CD8-positive, alpha-beta T cell (primary cell): ENCODE measurements at regions of chr4 and their contacts with region 1.

Region 1: DNA sequence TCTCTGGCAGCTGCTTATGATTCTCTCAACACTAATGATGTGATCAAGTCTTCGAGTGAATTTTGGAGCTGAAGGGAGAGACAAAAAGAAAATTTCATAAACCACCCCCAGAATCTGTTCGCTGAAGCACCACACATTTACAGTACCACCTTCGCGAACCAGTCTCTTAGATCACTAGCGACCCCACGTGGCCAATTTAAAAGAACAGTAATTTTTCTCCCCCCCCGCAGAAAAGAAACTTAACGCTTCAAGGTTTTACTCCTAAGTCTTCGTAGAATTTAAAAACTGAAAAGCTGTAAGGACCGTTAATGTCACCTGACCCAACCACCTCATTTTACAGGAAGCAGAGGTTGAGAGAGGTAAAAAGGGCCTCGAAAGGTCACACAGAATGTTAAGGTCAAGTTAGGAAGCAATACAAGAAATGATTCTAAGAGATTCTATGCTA is 187.5 kb downstream of the QDPR start:
- DNase-seq: peak in 8 of 9 experiments; percentile 30 to 66 (median 55)
- ATAC-seq: peak; percentile 66
- H3K4me3 ChIP-seq: no peak overlapping the region
- H3K4me3 Mint-ChIP-seq: peak overlapping the region; percentile 56
- H3K27ac ChIP-seq: no peak overlapping the region
- H3K27ac Mint-ChIP-seq: no peak overlapping the region
- H3K4me1 ChIP-seq: peaks cover 4% of the 10 kb centered on the region
- H3K4me1 Mint-ChIP-seq: peaks cover 11% of the 10 kb centered on the region
- H3K27me3 ChIP-seq: no peaks in the 10 kb centered on the region
- H3K27me3 Mint-ChIP-seq: no peaks in the 10 kb centered on the region
- CTCF ChIP-seq: peak; percentile 61

Region 2: DNA sequence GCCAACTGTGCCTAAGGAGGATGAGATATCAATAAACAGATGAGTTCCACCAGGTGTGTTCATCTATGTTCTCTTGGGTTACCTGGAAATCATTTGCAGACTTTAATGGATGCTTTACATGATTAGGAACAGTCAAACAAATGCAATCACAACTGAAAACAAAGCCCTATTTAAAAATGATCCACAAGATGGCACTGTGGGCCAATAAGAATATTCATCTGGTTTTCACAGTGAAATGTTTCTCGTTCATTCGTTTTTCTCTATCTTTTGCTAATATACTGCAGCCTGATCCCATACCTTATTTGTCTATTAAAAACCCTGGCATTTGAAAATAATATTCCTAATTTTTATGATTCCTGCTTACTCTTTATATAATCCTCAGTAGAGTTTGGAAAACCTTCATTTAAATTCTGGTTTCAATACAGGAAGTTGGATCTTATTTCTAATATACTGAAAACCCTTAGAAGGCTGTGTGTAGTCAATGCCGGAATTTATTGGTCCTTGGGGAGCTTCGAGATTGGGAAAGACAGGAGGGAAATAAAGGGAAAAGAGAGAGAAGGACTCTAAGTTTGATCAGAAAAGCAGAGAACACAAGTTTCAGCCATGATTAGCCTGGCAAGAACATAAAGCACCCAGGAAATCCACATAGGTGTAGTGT is 1034.4 kb before region 1 on chr4:
- CTCF ChIA-PET with region 1: interaction called, 6 read pairs
- POLR2A ChIA-PET with region 1: no interaction called
- intact Hi-C with region 1: loop called (anchors 2 kb)
- DNase-seq: peak in 2 of 9 experiments; percentile 24 to 41
- ATAC-seq: no peak
- H3K4me3 ChIP-seq: no peak overlapping the region
- H3K4me3 Mint-ChIP-seq: no peak overlapping the region
- H3K27ac ChIP-seq: no peak overlapping the region
- H3K27ac Mint-ChIP-seq: no peak overlapping the region
- H3K4me1 ChIP-seq: no peaks in the 10 kb centered on the region
- H3K4me1 Mint-ChIP-seq: peaks cover 4% of the 10 kb centered on the region
- H3K27me3 ChIP-seq: no peaks in the 10 kb centered on the region
- H3K27me3 Mint-ChIP-seq: peaks cover 23% of the 10 kb centered on the region
- CTCF ChIP-seq: peak; percentile 65

Region 3: DNA sequence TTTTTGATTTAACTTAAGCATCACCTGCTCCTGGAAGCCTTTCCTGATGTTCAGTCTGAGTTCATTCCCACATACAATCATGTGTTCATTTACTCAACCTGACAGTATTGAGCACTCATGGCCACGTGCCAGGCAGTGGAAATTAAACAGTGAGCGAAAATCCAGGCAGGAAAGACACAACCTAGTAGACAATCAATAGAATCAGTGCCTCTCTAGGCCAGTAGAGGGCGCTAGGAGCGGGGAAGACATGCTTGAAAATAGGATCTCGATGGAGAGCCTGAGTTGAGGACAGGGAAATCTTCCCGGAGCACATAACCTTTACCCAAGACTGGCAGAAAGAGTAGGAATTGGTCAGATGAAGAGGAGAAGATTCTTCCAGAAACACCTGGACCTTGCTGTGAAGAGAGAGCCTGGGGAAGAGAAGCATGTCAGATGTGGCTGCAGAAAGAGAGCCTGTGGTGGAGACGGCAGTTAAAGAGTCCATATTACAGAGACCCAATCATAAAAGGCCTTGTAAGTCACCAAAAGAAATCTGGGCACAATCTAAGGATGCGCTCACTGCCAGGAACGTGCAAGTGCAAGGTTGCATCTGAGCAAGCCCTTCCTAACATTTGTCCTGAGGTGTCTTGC is 529.5 kb before region 1 on chr4:
- CTCF ChIA-PET with region 1: no interaction called
- POLR2A ChIA-PET with region 1: no interaction called
- intact Hi-C with region 1: loop called in 1 of 2 experiments (anchors 5 kb)
- DNase-seq: peak in 5 of 9 experiments; percentile 2 to 52 (median 37)
- ATAC-seq: no peak
- H3K4me3 ChIP-seq: no peak overlapping the region
- H3K4me3 Mint-ChIP-seq: no peak overlapping the region
- H3K27ac ChIP-seq: no peak overlapping the region
- H3K27ac Mint-ChIP-seq: no peak overlapping the region
- H3K4me1 ChIP-seq: no peaks in the 10 kb centered on the region
- H3K4me1 Mint-ChIP-seq: peaks cover 1% of the 10 kb centered on the region
- H3K27me3 ChIP-seq: no peaks in the 10 kb centered on the region
- H3K27me3 Mint-ChIP-seq: no peaks in the 10 kb centered on the region
- CTCF ChIP-seq: peak; percentile 47

Region 4: GRCh38 chr4:17336524-17336961 is 12.1 kb after region 1 on chr4:
- CTCF ChIA-PET with region 1: interaction called, 18 read pairs
- POLR2A ChIA-PET with region 1: no interaction called
- intact Hi-C with region 1: no loop called
- DNase-seq: peak; percentile 32 to 90 (median 70)
- ATAC-seq: peak; percentile 95
- H3K4me3 ChIP-seq: no peak overlapping the region
- H3K4me3 Mint-ChIP-seq: peak overlapping the region; percentile 27
- H3K27ac ChIP-seq: peak overlapping the region in 1 of 2 experiments; percentile 44
- H3K27ac Mint-ChIP-seq: peak overlapping the region; percentile 91
- H3K4me1 ChIP-seq: peaks cover 17% of the 10 kb centered on the region
- H3K4me1 Mint-ChIP-seq: peaks cover 22% of the 10 kb centered on the region
- H3K27me3 ChIP-seq: no peaks in the 10 kb centered on the region
- H3K27me3 Mint-ChIP-seq: no peaks in the 10 kb centered on the region
- CTCF ChIP-seq: no peak